A673 (cell line): ENCODE measurements at regions of chr10 and their contacts with region 1.

Region 1: GRCh38 chr10:110218632-110219031 is 11.2 kb downstream of the MXI1 start:
- DNase-seq: no peak
- H3K4me3 ChIP-seq: no peak overlapping the region
- H3K27ac ChIP-seq: no peak overlapping the region
- H3K4me1 ChIP-seq: peaks cover 15% of the 10 kb centered on the region
- H3K27me3 ChIP-seq: no peaks in the 10 kb centered on the region
- CTCF ChIP-seq: no peak

Region 2: GRCh38 chr10:109883859-109884771 is 334.5 kb before region 1 on chr10:
- CTCF ChIA-PET with region 1: interaction called, 5 read pairs
- POLR2A ChIA-PET with region 1: no interaction called
- intact Hi-C with region 1: loop called (anchors 5 kb)
- DNase-seq: peak; percentile 89
- H3K4me3 ChIP-seq: no peak overlapping the region
- H3K27ac ChIP-seq: no peak overlapping the region
- H3K4me1 ChIP-seq: peaks cover 4% of the 10 kb centered on the region
- H3K27me3 ChIP-seq: no peaks in the 10 kb centered on the region
- CTCF ChIP-seq: peak; percentile 95